ENCODE measurements at regions of chr10 and their contacts with region 1.

Region 1: GRCh38 chr10:97037365-97038361 is 148.1 kb downstream of the SLIT1 start:
- DNase-seq: peak; percentile 51 to 64 (median 53)
- H3K4me3 ChIP-seq: peak overlapping the region; percentile 34 to 36
- H3K4me3 Mint-ChIP-seq: peak overlapping the region; percentile 69 to 86 (median 79)
- H3K27ac ChIP-seq: no peak overlapping the region
- H3K27ac Mint-ChIP-seq: peak overlapping the region in 4 of 7 donors; percentile 16 to 57 (median 42)
- H3K4me1 ChIP-seq: no peaks in the 10 kb centered on the region
- H3K4me1 Mint-ChIP-seq: peaks cover 7 to 19% (median 11%) of the 10 kb centered on the region in 4 donors
- H3K27me3 ChIP-seq: no peaks in the 10 kb centered on the region
- H3K27me3 Mint-ChIP-seq: peaks cover 4 to 10% of the 10 kb centered on the region in 2 donors

Region 2: GRCh38 chr10:97020452-97021400 is 16.9 kb before region 1 on chr10:
- CTCF ChIA-PET with region 1: interaction called, 86 read pairs
- POLR2A ChIA-PET with region 1: no interaction called
- intact Hi-C with region 1: no loop called
- DNase-seq: no peak
- H3K4me3 ChIP-seq: no peak overlapping the region
- H3K4me3 Mint-ChIP-seq: no peak overlapping the region
- H3K27ac ChIP-seq: no peak overlapping the region
- H3K27ac Mint-ChIP-seq: no peak overlapping the region
- H3K4me1 ChIP-seq: no peaks in the 10 kb centered on the region
- H3K4me1 Mint-ChIP-seq: peaks cover 3 to 10% (median 4%) of the 10 kb centered on the region in 4 donors
- H3K27me3 ChIP-seq: no peaks in the 10 kb centered on the region
- H3K27me3 Mint-ChIP-seq: no peaks in the 10 kb centered on the region

Region 3: DNA sequence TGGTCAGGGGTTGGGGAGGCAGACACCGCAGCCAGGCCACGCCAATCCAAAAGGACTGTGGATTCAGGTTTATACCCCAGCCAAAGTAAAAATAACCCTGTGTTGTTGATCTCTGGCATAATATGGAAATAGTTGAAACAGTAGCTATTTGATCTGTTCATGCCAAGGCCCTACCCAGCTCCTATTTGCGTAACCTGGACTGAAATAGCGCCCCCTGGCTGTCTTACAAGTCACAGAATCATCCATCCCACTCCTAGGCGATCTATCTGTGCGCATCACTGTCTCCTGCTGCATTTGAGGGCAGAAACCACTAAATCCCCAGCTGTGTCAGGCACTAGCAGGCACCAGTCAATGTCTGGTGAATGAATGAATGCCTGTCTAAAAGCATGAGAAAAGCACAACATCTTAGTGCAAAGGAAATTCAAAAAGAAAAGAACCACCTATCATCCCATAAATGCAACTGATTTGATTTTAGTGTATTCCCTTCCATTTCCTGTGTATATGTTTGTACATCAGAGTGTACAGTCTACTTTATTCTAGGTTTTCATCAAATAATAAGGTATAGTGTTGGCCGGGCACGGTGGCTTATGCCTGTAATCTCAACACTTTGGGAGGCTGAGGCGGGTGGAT is 11.9 kb before region 1 on chr10:
- CTCF ChIA-PET with region 1: interaction called, 86 read pairs
- POLR2A ChIA-PET with region 1: no interaction called
- intact Hi-C with region 1: no loop called
- DNase-seq: peak in 4 of 5 donors; percentile 30 to 39 (median 34)
- H3K4me3 ChIP-seq: no peak overlapping the region
- H3K4me3 Mint-ChIP-seq: no peak overlapping the region
- H3K27ac ChIP-seq: no peak overlapping the region
- H3K27ac Mint-ChIP-seq: no peak overlapping the region
- H3K4me1 ChIP-seq: no peaks in the 10 kb centered on the region
- H3K4me1 Mint-ChIP-seq: no peaks in the 10 kb centered on the region
- H3K27me3 ChIP-seq: no peaks in the 10 kb centered on the region
- H3K27me3 Mint-ChIP-seq: peaks cover 0 to 3% of the 10 kb centered on the region in 2 donors

Region 4: DNA sequence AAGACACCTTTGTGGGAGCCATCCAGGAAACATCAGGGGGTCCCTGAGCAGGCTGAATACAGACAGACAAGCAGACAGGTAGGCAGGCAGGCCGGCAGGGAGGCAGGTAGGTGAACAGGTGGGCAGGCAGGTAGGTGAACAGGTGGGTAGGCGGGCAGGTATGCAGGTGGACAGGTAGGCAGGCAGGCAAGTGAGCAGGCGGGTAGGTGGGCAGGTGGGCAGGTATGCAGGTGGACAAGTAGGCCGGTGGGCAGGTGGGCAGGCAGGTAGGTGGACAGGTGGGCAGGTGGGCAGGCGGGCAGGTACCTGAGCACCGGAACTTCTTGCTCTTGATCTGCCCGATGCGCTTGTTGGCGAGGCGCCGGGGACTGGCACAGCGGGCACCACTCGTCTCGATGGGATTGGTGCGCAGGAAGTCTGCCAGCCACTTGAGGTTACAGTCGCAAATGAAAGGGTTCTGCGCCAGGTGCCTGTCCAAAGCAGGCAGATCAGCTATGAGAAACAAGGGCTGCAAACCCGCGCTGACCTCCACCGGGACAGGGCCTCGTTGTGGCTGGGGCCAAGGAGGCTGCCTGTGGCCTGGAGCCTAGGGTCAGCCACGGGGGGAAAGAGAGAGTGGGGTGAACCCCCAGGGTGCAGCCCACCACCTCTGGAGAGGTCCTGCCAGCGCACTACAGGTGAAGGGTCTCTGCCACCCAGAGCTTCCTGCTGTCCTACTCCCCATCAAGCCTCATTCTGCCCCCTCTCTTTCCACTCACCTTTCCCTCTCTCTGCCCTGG is 11.2 kb after region 1 on chr10:
- CTCF ChIA-PET with region 1: interaction called, 14 read pairs
- POLR2A ChIA-PET with region 1: no interaction called
- intact Hi-C with region 1: no loop called
- DNase-seq: no peak
- H3K4me3 ChIP-seq: no peak overlapping the region
- H3K4me3 Mint-ChIP-seq: no peak overlapping the region
- H3K27ac ChIP-seq: no peak overlapping the region
- H3K27ac Mint-ChIP-seq: no peak overlapping the region
- H3K4me1 ChIP-seq: no peaks in the 10 kb centered on the region
- H3K4me1 Mint-ChIP-seq: no peaks in the 10 kb centered on the region
- H3K27me3 ChIP-seq: no peaks in the 10 kb centered on the region
- H3K27me3 Mint-ChIP-seq: peaks cover 3 to 7% of the 10 kb centered on the region in 2 donors

Region 5: GRCh38 chr10:97196223-97197029 is 158.8 kb after region 1 on chr10:
- CTCF ChIA-PET with region 1: interaction called, 10 read pairs
- POLR2A ChIA-PET with region 1: no interaction called
- intact Hi-C with region 1: no loop called
- DNase-seq: peak; percentile 62 to 73 (median 66)
- H3K4me3 ChIP-seq: peak overlapping the region; percentile 52 to 64
- H3K4me3 Mint-ChIP-seq: peak overlapping the region; percentile 83 to 91 (median 86)
- H3K27ac ChIP-seq: no peak overlapping the region
- H3K27ac Mint-ChIP-seq: peak overlapping the region in 4 of 7 donors; percentile 25 to 70 (median 36)
- H3K4me1 ChIP-seq: peaks cover 6% of the 10 kb centered on the region
- H3K4me1 Mint-ChIP-seq: peaks cover 6 to 11% (median 7%) of the 10 kb centered on the region in 4 donors
- H3K27me3 ChIP-seq: no peaks in the 10 kb centered on the region
- H3K27me3 Mint-ChIP-seq: peaks cover 8 to 10% of the 10 kb centered on the region in 2 donors

Region 6: DNA sequence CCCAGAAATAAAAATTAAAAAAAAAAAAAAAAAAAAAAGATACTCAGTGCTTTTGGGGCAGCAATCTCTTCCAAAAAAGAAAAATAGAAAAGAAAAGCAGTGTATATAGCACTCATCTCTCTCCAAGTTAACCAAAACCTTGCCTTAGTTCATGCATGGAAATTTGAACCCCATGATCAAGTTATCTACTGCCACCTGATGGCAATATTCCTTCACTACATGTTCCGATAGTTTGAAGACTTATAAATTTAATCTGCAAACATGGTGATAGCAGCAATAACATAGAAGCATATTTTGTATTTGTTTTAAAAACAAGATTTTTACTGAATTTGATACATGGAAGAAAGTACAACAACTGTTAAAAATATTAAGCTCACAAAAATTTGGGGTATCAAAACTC is 196.7 kb after region 1 on chr10:
- CTCF ChIA-PET with region 1: interaction called, 14 read pairs
- POLR2A ChIA-PET with region 1: no interaction called
- intact Hi-C with region 1: no loop called
- DNase-seq: peak in 3 of 5 donors; percentile 2 to 6 (median 3)
- H3K4me3 ChIP-seq: no peak overlapping the region
- H3K4me3 Mint-ChIP-seq: no peak overlapping the region
- H3K27ac ChIP-seq: no peak overlapping the region
- H3K27ac Mint-ChIP-seq: no peak overlapping the region
- H3K4me1 ChIP-seq: no peaks in the 10 kb centered on the region
- H3K4me1 Mint-ChIP-seq: peaks cover 0 to 2% (median under 1%) of the 10 kb centered on the region in 4 donors
- H3K27me3 ChIP-seq: no peaks in the 10 kb centered on the region
- H3K27me3 Mint-ChIP-seq: no peaks in the 10 kb centered on the region

Region 7: DNA sequence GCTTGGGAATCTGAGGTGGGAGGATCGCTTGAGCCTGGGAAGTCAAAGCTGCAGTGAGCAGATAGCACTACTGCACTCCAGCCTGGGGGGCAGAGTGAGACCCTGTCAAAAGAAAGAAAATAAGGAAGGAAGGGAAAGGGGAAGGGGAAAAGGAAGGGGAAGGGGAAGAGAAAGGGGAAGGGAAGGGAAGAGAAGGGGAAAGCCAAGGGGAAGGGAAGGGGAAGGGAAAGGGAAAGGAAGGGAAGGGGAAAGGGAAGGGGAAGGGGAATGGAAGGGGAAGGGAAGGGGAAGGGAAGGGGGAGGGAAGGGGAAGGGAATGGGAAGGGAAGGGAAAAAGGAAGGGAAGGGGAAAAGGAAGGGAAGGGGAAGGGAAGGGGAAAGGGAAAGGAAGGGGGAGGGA is 213.3 kb after region 1 on chr10:
- CTCF ChIA-PET with region 1: no interaction called
- POLR2A ChIA-PET with region 1: no interaction called
- intact Hi-C with region 1: no loop called
- DNase-seq: no peak
- H3K4me3 ChIP-seq: no peak overlapping the region
- H3K4me3 Mint-ChIP-seq: no peak overlapping the region
- H3K27ac ChIP-seq: no peak overlapping the region
- H3K27ac Mint-ChIP-seq: peak overlapping the region in 1 of 7 donors; percentile 42
- H3K4me1 ChIP-seq: no peaks in the 10 kb centered on the region
- H3K4me1 Mint-ChIP-seq: peaks cover 0 to 1% (median 0%) of the 10 kb centered on the region in 4 donors
- H3K27me3 ChIP-seq: no peaks in the 10 kb centered on the region
- H3K27me3 Mint-ChIP-seq: no peaks in the 10 kb centered on the region